Ascending aorta (tissue), 2 donors: ENCODE measurements at regions of chr1 and their contacts with region 1.

Region 1: DNA sequence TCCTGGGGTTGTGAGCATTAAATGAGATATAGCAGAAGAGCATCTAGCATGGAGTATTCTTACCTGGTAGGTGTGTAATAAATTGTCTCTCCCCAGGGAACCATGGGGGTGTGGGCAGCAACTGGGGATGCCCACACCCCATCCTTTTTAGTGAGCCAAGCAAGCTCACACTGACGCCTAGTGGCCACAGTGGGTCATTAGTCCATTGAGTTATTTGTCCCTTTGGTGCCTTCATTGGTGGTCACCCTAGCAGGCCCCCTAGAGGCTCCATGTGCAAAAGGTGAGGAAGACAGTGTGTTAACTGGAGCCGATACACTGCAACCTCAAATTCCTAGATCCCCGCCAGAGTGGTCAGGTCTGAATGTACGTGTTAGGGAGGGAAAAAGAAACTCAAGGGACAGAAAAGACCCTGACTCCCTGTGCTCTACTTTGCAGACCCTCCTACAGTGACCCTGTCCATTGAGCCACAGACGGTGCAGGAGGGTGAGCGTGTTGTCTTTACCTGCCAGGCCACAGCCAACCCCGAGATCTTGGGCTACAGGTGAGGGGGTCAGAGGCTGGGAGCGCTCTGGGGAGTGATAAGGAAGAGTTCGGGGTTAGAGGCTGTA is 93.3 kb upstream of the CD1D start:
- DNase-seq: peak in 1 of 2 donors; percentile 77
- H3K4me3 ChIP-seq: no peak overlapping the region
- H3K27ac ChIP-seq: no peak overlapping the region
- H3K4me1 ChIP-seq: no peaks in the 10 kb centered on the region
- H3K27me3 ChIP-seq: no peaks in the 10 kb centered on the region
- CTCF ChIP-seq: peak; percentile 68 to 85 (median 80)

Region 2: GRCh38 chr1:158035976-158036583 is 51.3 kb before region 1 on chr1:
- intact Hi-C with region 1: loop called (anchors 5 kb)
- DNase-seq: no peak
- H3K4me3 ChIP-seq: no peak overlapping the region
- H3K27ac ChIP-seq: peak overlapping the region; percentile 15 to 37
- H3K4me1 ChIP-seq: peaks cover 6 to 23% of the 10 kb centered on the region in 2 donors
- H3K27me3 ChIP-seq: no peaks in the 10 kb centered on the region
- CTCF ChIP-seq: peak; percentile 62 to 82 (median 65)

Region 3: DNA sequence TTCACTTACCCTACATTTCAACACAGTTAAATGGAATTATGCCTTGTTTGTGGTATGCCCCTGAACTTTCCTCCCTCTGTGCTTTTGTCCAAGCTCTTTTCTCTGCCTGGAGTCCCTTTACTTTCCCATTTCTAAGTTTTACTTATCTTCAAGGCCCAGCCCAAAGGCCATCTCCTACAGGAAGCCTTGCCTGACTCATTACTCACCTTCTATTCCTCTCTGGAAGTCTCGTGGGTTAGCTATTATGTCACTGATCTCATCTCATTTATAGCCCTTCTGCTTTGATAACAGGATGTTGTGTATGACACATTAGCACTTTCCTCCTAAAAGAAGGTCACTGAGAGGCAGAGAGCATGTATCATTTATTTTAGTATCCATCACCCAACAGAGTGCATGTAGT is 14.5 kb after region 1 on chr1:
- intact Hi-C with region 1: no loop called
- DNase-seq: no peak
- H3K4me3 ChIP-seq: no peak overlapping the region
- H3K27ac ChIP-seq: no peak overlapping the region
- H3K4me1 ChIP-seq: no peaks in the 10 kb centered on the region
- H3K27me3 ChIP-seq: no peaks in the 10 kb centered on the region
- CTCF ChIP-seq: no peak